ENCODE measurements at regions of chr2 and their contacts with region 1.

Region 1: GRCh38 chr2:170873035-170873692 is 55.9 kb upstream of the GORASP2 start:
- DNase-seq: peak; percentile 70
- ATAC-seq: peak; percentile 99
- H3K4me3 ChIP-seq: peak overlapping the region in 2 of 3 experiments; percentile 44 to 49; a peak in 4 of 6 replicates
- H3K27ac ChIP-seq: no peak overlapping the region
- H3K4me1 ChIP-seq: no peaks in the 10 kb centered on the region; the same call in 1 of the 2 replicates
- H3K27me3 ChIP-seq: peaks cover 0 to 15% of the 10 kb centered on the region in 2 experiments; a peak in 2 of 5 replicates
- CTCF ChIP-seq: peak; percentile 97
- EP300 ChIP-seq: no peak
- POLR2A ChIP-seq: no peak
- RAD21 ChIP-seq: peak; percentile 71

Region 2: DNA sequence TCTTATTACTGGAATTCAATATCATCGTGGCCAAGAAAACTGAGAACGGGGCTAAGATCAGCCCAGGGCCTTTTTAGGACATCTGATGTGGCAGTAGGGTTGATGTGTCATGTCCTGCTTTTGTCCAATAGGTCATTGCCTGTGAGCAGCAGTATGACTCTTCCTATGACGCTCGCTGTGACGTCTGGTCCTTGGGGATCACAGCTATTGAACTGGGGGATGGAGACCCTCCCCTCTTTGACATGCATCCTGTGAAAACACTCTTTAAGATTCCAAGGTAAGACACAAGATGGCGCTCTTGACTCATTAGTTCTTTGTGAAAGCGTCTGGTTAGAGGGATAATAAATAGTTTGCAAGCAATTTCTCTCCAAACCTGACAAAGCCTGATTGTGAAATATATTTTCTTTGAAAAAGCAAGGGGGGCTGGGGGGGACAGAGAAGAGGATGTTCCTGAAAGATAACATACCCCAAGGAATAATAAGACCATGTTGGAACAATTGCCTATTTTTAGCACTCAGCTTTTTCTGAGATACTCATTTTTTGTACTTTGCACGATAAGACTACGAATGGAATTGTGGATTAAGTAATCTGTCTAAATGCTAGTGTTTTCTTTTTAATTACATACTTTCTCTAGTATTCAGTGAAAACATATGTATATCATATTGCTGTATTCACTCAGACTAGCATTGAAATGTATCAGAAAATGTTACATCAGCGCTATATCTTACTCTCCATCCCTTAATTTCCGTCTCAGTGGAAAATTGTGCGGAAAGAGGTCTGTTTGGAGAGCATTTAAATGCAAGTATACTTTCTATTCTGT is 637.1 kb before region 1 on chr2:
- CTCF ChIA-PET with region 1: interaction called, 3 read pairs
- POLR2A ChIA-PET with region 1: no interaction called
- in situ Hi-C with region 1: no loop called
- intact Hi-C with region 1: loop called (anchors 2 kb)
- DNase-seq: peak; percentile 54
- ATAC-seq: peak; percentile 73
- H3K4me3 ChIP-seq: no peak overlapping the region
- H3K27ac ChIP-seq: no peak overlapping the region
- H3K4me1 ChIP-seq: no peaks in the 10 kb centered on the region
- H3K27me3 ChIP-seq: peaks cover 0 to 23% of the 10 kb centered on the region in 2 experiments; a peak in 4 of 5 replicates
- CTCF ChIP-seq: peak; percentile 69
- EP300 ChIP-seq: no peak
- POLR2A ChIP-seq: no peak
- RAD21 ChIP-seq: peak; percentile 47

Region 3: DNA sequence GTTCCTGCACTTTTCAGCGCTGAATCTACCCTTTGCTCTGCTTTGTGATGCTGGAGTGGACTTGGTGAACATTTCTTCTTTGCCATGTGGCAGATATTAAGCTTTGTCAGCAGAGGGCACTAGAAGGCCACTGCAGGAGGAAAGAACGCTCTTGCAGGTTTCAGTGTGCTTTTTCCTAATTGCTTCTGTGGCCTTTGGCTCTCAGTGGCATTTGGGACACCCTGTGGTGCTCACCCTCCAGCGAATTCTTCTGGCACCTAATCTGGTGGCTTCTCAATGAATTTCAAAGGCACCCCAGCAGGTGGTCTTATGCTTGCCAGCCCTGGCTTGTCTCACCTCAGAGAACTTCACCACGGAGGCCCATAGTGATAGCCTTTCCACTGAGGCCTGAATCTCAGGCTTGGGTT is 548.5 kb before region 1 on chr2:
- CTCF ChIA-PET with region 1: interaction called, 7 read pairs
- POLR2A ChIA-PET with region 1: no interaction called
- in situ Hi-C with region 1: no loop called
- intact Hi-C with region 1: loop called (anchors 1 kb)
- DNase-seq: peak; percentile 51
- ATAC-seq: peak; percentile 81
- H3K4me3 ChIP-seq: no peak overlapping the region
- H3K27ac ChIP-seq: no peak overlapping the region
- H3K4me1 ChIP-seq: no peaks in the 10 kb centered on the region
- H3K27me3 ChIP-seq: no peaks in the 10 kb centered on the region
- CTCF ChIP-seq: peak; percentile 90
- EP300 ChIP-seq: no peak
- POLR2A ChIP-seq: no peak
- RAD21 ChIP-seq: peak; percentile 76

Region 4: GRCh38 chr2:170369894-170370293 is 503.3 kb before region 1 on chr2:
- CTCF ChIA-PET with region 1: interaction called, 6 read pairs
- POLR2A ChIA-PET with region 1: no interaction called
- in situ Hi-C with region 1: no loop called
- intact Hi-C with region 1: loop called (anchors 1 kb)
- DNase-seq: peak; percentile 40
- ATAC-seq: no peak
- H3K4me3 ChIP-seq: no peak overlapping the region
- H3K27ac ChIP-seq: no peak overlapping the region
- H3K4me1 ChIP-seq: no peaks in the 10 kb centered on the region
- H3K27me3 ChIP-seq: peaks cover 0 to 48% of the 10 kb centered on the region in 2 experiments; a peak in 3 of 5 replicates
- CTCF ChIP-seq: peak; percentile 34
- EP300 ChIP-seq: no peak
- POLR2A ChIP-seq: no peak
- RAD21 ChIP-seq: no peak; the same call in 1 of the 2 replicates

Region 5: DNA sequence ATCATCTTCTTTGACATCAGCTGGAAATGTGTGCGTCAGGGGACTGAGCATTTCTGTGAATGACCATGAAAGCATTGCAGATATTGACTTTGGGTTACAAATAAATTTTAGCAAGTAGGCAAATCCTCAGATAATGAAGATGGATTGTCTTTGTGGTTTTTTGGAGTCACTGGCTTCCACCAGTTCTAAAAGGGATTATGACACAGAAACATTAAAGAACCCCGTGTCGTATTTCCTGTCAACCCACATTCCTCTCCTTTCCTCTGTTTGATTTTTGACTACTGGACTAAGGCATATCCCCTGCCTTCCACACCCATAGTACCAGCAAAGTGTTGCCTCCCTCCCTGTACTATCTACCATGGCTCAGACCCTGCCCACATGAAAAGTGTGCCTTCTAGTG is 427.1 kb before region 1 on chr2:
- CTCF ChIA-PET with region 1: no interaction called
- POLR2A ChIA-PET with region 1: no interaction called
- in situ Hi-C with region 1: no loop called
- intact Hi-C with region 1: no loop called
- DNase-seq: peak; percentile 81
- ATAC-seq: peak; percentile 51; the same call in 2 of the 3 replicates
- H3K4me3 ChIP-seq: no peak overlapping the region
- H3K27ac ChIP-seq: no peak overlapping the region
- H3K4me1 ChIP-seq: peaks cover 28% of the 10 kb centered on the region
- H3K27me3 ChIP-seq: no peaks in the 10 kb centered on the region
- CTCF ChIP-seq: no peak
- EP300 ChIP-seq: peak in 1 of 2 experiments; percentile 44; a peak in 1 of 4 replicates
- POLR2A ChIP-seq: no peak
- RAD21 ChIP-seq: no peak

Region 6: GRCh38 chr2:170886386-170886785 is 13.2 kb after region 1 on chr2:
- CTCF ChIA-PET with region 1: no interaction called
- POLR2A ChIA-PET with region 1: no interaction called
- in situ Hi-C with region 1: no loop called
- intact Hi-C with region 1: no loop called
- DNase-seq: no peak
- ATAC-seq: no peak
- H3K4me3 ChIP-seq: no peak overlapping the region
- H3K27ac ChIP-seq: no peak overlapping the region
- H3K4me1 ChIP-seq: no peaks in the 10 kb centered on the region
- H3K27me3 ChIP-seq: no peaks in the 10 kb centered on the region; a peak in 2 of 5 replicates
- CTCF ChIP-seq: no peak
- EP300 ChIP-seq: no peak
- POLR2A ChIP-seq: no peak
- RAD21 ChIP-seq: no peak

Measured in HepG2 (cell line).